ENCODE measurements at regions of chr5 and their contacts with region 1.

Region 1: DNA sequence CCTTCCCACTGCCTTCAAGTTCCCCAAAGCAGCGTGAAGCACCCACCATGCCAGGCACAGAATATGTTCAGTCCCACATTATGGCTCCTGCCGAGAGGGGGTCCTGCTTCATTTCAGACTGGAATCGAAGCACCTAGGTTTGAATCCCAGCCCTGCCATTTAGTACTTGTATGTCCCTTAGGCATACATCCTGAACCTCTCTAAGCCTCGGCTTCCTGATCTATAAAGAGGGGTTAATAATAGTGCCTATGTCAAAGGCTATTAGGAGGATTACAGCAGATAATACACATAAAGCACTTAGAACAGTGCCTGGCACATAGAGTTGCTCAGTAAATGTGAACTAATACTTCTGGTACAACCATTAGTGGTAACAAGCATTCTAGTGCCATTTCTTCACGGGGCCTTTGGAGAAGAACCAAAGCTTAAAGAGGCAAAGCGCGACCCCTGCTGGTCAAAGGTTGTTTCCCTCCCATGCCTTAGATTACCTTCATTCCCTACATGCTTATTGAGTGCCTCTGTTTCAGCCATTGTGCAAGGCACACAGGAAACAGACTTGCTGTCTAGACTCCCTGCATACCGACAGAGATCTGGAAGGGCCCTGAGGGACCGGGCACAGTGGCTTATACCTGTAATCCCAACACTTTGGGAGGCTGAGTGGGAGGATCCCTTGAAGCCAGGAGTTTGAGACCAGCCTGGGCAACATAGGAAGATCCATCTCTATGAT is 98.2 kb downstream of the PPARGC1B start:
- DNase-seq: peak; percentile 51 to 94 (median 89)

Region 2: DNA sequence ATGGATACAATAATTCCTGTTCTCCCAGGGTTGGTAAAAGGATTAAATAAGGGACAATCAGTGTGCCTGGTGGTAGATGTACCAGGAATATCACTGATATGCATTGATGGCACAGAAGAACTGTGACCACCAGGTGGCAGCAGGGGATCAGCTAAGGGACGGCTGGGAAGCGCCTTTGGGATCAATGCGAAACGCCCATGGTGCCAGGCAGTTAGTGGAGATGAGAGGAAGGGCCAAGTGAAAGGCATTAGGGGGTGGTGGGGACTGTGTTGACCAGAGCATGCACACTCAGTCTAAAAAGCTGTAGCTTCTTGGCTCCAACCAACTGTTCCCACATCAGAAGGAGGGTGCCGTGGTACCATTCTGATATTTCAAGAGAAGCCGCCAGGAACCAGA is 191.5 kb before region 1 on chr5:
- intact Hi-C with region 1: loop called (anchors 2 kb)
- DNase-seq: peak in 33 of 42 donors; percentile 9 to 96 (median 84)

Region 3: GRCh38 chr5:149728303-149728702 is 100.0 kb before region 1 on chr5:
- intact Hi-C with region 1: loop called (anchors 5 kb)
- DNase-seq: peak in 1 of 42 donors; percentile 34

Region 4: DNA sequence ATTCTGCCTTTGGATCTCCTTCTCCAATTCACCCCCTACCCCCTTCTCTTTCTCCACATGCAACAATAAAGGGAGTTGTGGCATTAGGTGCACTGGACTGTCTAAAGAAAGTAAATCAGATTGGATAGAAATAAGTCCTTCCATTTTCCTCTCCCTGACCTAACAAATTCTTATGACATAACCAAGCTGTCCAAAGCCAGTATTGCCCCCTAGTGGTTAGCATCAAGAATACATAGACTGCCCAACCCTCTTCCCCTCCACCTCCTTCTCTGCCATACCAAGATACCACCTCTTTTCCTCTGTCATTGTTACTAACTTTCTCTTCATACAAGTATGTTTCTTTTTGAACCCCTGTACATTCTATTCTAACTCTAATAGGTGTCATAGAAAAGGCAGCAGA is 52.5 kb before region 1 on chr5:
- intact Hi-C with region 1: no loop called
- DNase-seq: no peak